Gastrocnemius medialis (tissue), 4 donors: ENCODE measurements at regions of chr9 and their contacts with region 1.

Region 1: GRCh38 chr9:77111408-77111807 is 65.9 kb upstream of the VPS13A start:
- DNase-seq: no peak
- ATAC-seq: no peak
- H3K4me3 ChIP-seq: no peak overlapping the region
- H3K27ac ChIP-seq: no peak overlapping the region
- H3K4me1 ChIP-seq: no peaks in the 10 kb centered on the region
- H3K27me3 ChIP-seq: no peaks in the 10 kb centered on the region
- CTCF ChIP-seq: no peak
- POLR2A ChIP-seq: no peak

Region 2: DNA sequence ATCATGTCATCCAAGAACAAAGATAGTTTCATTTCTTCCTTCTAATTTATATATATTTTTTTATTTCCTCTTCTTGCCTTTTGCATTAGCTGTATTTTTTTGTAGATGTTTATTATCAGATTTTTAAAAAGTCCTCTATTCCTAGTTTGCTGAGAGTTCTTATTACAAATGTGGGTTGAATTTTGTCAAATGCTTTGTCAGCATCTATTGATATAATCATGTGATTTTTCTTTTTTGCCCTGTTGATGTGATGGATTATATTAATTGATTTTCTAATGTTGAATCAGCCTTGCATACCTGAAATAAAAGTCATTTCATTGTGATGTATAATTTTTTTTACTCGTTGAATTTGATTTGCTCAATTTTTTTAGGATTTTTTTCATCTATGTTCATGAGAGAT is 45.0 kb before region 1 on chr9:
- in situ Hi-C with region 1: loop called in 1 of 4 experiments (anchors 5 kb)
- intact Hi-C with region 1: no loop called
- DNase-seq: no peak
- ATAC-seq: no peak
- H3K4me3 ChIP-seq: no peak overlapping the region
- H3K27ac ChIP-seq: no peak overlapping the region
- H3K4me1 ChIP-seq: no peaks in the 10 kb centered on the region
- H3K27me3 ChIP-seq: no peaks in the 10 kb centered on the region
- CTCF ChIP-seq: no peak
- POLR2A ChIP-seq: no peak